RWPE1 (cell line): ENCODE measurements at regions of chr17 and their contacts with region 1.

Region 1: DNA sequence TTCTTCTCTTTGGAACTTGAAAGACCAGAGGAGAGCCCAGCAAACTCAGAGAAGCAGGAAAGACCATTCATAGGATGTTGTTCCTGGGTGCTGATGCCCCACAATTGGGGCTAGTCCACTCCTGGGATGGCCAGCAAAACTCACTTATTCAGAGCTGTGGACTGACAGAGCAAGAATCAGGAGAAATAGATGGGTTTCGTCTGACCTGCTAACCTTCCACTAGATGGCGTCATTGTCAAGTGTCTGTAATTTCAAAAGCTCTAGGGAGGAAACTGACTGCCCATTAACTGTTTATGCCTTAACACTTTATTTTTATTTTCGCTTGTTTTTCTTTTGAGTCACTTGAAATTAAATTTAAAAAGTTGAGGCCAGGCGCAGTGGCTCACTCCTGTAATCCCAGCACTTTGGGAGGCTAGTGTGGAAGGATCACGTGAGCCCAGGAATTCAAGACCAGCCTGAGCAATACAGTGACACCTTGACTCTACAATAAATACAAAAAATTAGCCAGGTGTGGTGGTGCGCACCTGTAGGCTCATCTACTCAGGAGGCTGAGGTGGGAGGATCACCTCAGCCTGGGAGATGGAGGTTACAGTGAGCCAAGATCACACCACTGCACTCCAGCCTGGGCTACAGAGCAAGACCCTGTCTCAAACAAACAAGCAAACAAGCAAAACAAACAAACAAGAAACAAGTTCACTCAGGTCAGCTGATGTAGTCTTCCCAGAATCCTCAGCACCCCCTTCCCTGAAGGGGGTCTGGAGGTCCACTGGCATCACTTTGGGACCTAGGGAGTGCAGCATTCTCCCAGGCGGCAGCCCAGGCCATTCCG is 28.6 kb upstream of the MILR1 start:
- DNase-seq: peak; percentile 66
- H3K27ac ChIP-seq: no peak overlapping the region
- CTCF ChIP-seq: peak; percentile 90

Region 2: DNA sequence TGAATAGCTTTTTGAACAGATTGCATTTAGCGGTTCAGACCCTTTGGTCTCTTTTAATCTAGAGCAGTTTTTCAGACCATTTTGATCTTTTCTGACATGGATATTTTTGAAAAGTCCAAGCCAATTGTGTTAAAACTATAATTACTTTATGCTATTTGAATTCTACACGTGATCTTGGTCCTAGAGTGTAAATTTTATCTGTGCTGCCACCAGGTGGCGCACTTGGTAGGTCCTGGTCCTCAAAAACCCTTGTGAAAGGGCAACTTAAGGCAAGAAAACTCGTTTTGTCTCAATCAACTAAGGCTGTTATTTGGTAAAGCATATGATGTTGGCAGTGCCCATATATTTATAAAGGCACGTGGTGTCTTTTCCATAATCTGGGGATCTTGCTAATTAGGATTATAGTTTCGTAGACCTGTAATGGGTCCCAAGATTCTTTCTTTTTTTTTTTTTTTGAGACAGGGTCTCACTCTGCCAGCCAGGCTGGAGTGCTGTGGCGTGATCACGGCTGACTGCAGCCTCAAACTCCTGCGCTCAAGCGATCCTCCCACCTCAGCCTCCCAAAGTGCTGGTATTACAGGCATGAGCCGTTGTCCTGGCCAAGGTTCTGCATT is 113.4 kb before region 1 on chr17:
- CTCF ChIA-PET with region 1: interaction called, 15 read pairs
- POLR2A ChIA-PET with region 1: no interaction called
- DNase-seq: peak; percentile 56
- H3K27ac ChIP-seq: 0 out of 2 replicates have a peak overlapping the region, but pooled peaks have one; percentile 21
- CTCF ChIP-seq: peak; percentile 85

Region 3: GRCh38 chr17:64320613-64321553 is 99.5 kb before region 1 on chr17:
- CTCF ChIA-PET with region 1: interaction called, 12 read pairs
- POLR2A ChIA-PET with region 1: no interaction called
- DNase-seq: peak; percentile 86
- H3K27ac ChIP-seq: peak overlapping the region; percentile 62
- CTCF ChIP-seq: peak; percentile 80

Region 4: DNA sequence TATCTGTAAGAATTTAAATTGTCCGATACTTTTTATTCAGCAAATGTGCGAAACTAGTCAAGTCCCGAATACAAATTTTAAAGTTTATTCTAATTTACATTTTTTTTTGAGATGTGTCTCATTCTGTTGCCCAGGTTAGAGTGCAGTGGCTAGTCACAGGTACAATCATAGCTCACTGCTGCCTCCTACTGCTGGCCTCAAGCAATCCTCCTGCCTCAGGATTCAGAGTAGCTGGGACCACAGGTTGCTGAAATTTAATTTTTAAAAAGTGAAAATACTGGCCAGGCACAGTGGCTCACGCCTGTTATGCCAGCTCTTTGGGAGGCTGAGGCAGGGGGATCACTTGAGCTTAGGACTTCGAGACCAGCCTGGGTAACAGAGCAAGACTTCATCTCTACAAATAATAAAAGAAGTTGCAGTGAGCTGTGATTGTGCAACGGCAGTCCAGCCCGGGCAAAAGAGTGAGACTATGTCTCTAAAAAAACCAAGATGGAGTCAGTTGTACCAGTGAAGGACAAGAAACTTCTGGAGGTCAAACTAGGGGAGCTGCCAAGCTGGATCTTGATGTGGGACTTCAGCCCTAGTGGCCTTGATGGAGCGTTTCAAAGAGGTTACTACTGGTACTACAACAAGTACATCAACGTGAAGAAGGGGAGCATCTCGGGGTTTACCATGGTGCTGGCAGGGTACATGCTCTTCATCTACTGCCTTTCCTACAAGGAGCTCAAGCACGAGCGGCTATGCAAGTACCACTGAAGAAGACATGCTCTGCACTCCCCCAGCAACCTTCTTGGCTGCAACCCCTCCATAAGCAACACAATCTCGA is 70.9 kb after region 1 on chr17:
- CTCF ChIA-PET with region 1: interaction called, 14 read pairs
- POLR2A ChIA-PET with region 1: no interaction called
- DNase-seq: no peak
- H3K27ac ChIP-seq: no peak overlapping the region
- CTCF ChIP-seq: peak; percentile 45